CD14-positive monocyte (primary cell): ENCODE measurements at regions of chr4 and their contacts with region 1.

Region 1: DNA sequence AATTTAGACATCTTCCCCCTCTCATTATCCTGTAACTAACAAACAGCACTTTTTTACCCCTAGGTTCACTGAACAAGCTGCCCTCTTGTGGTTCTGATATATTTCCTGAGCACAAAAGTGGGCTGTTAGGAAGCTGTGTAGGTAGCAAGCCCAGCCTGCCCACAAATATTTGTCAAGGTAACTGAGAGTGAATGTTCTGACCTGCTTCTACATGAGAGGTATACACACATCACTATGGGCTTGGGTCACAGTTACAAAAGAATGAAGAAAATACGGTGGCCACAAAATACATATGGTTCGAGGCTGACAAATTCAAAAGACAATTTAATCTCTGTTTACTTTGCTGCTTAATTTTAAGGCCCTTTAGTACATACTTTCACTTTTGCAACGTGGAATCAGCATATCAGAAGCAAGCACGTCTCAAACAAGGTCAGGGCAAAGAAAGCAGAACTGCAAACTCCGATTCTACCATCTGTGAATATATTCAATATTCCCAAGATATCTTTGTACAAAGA is 78.7 kb downstream of the RBM47 start:
- DNase-seq: peak; percentile 53 to 69 (median 65)
- H3K4me3 ChIP-seq: peak overlapping the region; percentile 36 to 71 (median 54)
- H3K4me3 Mint-ChIP-seq: peak overlapping the region; percentile 80 to 91
- H3K27ac ChIP-seq: peak overlapping the region; percentile 81 to 93
- H3K27ac Mint-ChIP-seq: peak overlapping the region; percentile 93 to 99 (median 98)
- H3K4me1 ChIP-seq: peaks cover 78 to 86% of the 10 kb centered on the region in 2 donors
- H3K4me1 Mint-ChIP-seq: peaks cover 78% of the 10 kb centered on the region
- H3K27me3 ChIP-seq: no peaks in the 10 kb centered on the region
- H3K27me3 Mint-ChIP-seq: no peaks in the 10 kb centered on the region
- CTCF ChIP-seq: peak; percentile 33

Region 2: DNA sequence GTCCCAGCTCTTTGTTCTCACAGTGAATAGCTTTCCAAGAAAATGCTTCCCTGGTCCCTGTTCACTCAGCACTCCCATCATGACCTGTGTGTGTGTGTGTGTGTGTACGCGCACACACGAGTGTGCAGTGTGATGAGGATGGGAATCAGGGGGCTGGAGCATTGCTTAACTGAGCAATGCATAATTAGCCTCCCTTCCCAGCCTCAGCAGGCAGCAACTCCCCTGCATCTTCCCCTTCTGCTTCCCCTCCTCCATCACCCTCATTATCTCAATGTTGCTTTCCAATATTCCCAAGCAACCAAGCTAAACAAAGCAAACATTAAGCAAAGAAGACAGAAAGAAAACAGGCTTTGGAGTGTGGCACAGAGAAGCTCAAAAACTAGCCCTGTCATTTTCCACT is 58.3 kb before region 1 on chr4:
- intact Hi-C with region 1: loop called (anchors 10 kb)
- DNase-seq: peak in 2 of 3 donors; percentile 14 to 19
- H3K4me3 ChIP-seq: no peak overlapping the region
- H3K4me3 Mint-ChIP-seq: no peak overlapping the region
- H3K27ac ChIP-seq: peak overlapping the region; percentile 25 to 79
- H3K27ac Mint-ChIP-seq: peak overlapping the region; percentile 79 to 93 (median 91)
- H3K4me1 ChIP-seq: peaks cover 35 to 57% of the 10 kb centered on the region in 2 donors
- H3K4me1 Mint-ChIP-seq: peaks cover 60% of the 10 kb centered on the region
- H3K27me3 ChIP-seq: no peaks in the 10 kb centered on the region
- H3K27me3 Mint-ChIP-seq: no peaks in the 10 kb centered on the region
- CTCF ChIP-seq: no peak

Region 3: GRCh38 chr4:40587823-40588222 is 36.8 kb after region 1 on chr4:
- intact Hi-C with region 1: loop called in 1 of 2 experiments (anchors 5 kb)
- DNase-seq: peak; percentile 82 to 92 (median 87)
- H3K4me3 ChIP-seq: peak overlapping the region in 1 of 3 experiments; percentile 49
- H3K4me3 Mint-ChIP-seq: peak overlapping the region in 1 of 2 donors; percentile 86
- H3K27ac ChIP-seq: peak overlapping the region; percentile 78 to 92
- H3K27ac Mint-ChIP-seq: peak overlapping the region; percentile 97 to 100 (median 99)
- H3K4me1 ChIP-seq: peaks cover 44 to 45% of the 10 kb centered on the region in 2 donors
- H3K4me1 Mint-ChIP-seq: peaks cover 58% of the 10 kb centered on the region
- H3K27me3 ChIP-seq: no peaks in the 10 kb centered on the region
- H3K27me3 Mint-ChIP-seq: no peaks in the 10 kb centered on the region
- CTCF ChIP-seq: no peak

Region 4: GRCh38 chr4:40607221-40607620 is 56.2 kb after region 1 on chr4:
- intact Hi-C with region 1: loop called in 1 of 2 experiments (anchors 10 kb)
- DNase-seq: peak; percentile 54 to 67 (median 55)
- H3K4me3 ChIP-seq: peak overlapping the region in 1 of 3 experiments; percentile 9
- H3K4me3 Mint-ChIP-seq: peak overlapping the region in 1 of 2 donors; percentile 33
- H3K27ac ChIP-seq: peak overlapping the region; percentile 54 to 79
- H3K27ac Mint-ChIP-seq: peak overlapping the region; percentile 8 to 97 (median 95)
- H3K4me1 ChIP-seq: peaks cover 66 to 94% of the 10 kb centered on the region in 2 donors
- H3K4me1 Mint-ChIP-seq: peaks cover 79% of the 10 kb centered on the region
- H3K27me3 ChIP-seq: no peaks in the 10 kb centered on the region
- H3K27me3 Mint-ChIP-seq: peaks cover 0 to 2% (median 2%) of the 10 kb centered on the region in 3 donors
- CTCF ChIP-seq: no peak

Region 5: DNA sequence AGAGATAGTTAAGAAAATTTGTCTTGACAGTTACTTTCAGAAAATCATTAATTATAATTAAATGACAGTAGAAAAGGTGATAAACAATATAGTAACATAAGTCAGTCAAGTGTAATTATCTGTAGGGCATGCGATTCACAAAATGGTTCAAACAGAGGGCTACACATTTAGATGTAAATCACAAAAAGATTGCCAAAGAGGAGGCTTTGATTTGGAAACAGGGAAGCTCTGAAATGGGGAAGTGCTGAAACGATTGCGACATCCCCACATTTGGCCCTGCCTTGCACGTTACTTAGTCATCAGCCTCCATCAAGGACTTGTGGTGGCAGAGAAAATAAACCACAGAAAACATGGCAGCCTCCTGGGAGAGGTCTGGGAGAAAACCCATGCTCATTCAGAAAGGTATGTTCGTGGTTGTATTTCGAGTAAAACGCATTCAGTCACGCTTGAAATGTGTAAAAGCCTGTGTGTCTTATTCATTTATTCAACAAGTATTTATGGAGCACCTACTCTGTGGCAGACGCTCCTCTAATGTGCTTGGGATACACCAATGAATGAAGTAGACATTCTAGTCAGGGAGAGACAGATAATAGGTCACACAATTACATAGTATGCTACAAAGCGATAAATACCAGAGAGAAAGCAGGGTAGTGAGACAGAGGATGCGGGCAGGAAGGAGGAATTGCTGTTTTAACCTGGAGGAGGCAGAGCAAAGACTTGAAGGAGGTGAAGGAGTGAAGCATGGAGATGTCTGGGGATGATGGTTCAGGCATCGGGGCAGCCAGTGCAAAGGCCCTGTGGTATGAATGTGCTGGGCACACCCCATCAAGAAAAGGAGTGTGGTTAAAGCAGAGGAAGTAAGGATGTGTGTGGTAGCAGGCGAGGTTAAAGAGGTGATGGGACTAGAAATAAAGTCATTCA is 70.8 kb after region 1 on chr4:
- intact Hi-C with region 1: loop called (anchors 2 to 5 kb)
- DNase-seq: peak; percentile 99
- H3K4me3 ChIP-seq: peak overlapping the region in 2 of 3 experiments; percentile 9 to 56
- H3K4me3 Mint-ChIP-seq: peak overlapping the region; percentile 13 to 75
- H3K27ac ChIP-seq: peak overlapping the region; percentile 88 to 97
- H3K27ac Mint-ChIP-seq: peak overlapping the region; percentile 94 to 98 (median 97)
- H3K4me1 ChIP-seq: peaks cover 84 to 92% of the 10 kb centered on the region in 2 donors
- H3K4me1 Mint-ChIP-seq: peaks cover 83% of the 10 kb centered on the region
- H3K27me3 ChIP-seq: no peaks in the 10 kb centered on the region
- H3K27me3 Mint-ChIP-seq: peaks cover 0 to 1% (median 0%) of the 10 kb centered on the region in 3 donors
- CTCF ChIP-seq: no peak

Region 6: DNA sequence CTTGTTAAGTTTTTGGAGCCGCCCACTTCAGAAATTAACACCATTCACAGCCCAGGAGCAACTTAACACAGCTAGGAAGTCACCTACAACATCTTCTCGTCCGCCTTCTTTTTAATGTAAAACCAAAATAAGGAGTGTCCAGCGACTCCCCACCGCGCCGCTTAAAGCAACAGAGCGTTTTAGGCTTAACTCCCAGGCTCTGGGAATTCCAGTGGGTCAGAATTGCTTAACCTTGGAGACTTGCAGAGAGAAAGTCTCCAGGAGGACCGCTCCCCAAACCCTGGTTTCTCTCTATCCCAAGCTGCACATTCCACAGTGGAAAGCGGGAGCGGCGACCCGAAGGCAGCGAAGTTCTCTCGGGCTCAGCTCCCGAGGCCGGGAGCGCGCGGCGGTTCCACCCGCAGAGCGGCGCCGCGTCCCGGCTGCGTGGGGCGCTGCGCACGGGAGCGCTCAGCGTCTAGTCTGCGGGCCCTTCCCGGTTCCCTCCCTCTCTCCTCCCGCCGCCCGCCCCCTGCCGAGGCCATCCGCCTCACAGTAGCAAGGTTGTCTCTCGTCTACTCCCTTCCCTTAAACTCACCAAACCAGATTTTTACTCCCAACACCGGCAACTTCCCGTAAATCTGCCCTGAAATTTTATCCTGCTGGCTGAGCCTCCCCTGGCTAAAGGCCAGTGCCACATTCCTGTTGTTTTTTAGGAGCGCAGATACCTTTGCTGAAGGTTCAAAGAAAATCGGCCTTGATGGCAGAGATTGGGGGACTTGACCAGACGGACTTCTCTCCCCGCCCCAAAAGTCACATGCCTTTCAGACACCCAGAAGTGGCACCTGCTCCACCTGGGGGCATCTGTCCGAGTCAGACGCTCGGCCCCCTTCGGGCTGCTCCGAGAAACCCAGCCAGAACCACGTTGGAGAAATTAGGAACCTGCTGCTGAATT is 78.7 kb after region 1 on chr4 and contains the start of gene RBM47:
- intact Hi-C with region 1: loop called in 1 of 2 experiments (anchors 5 kb)
- DNase-seq: peak; percentile 62 to 75 (median 66)
- H3K4me3 ChIP-seq: peak within 1 kb of the TSS; percentile 91 to 99 (median 97)
- H3K4me3 Mint-ChIP-seq: peak within 1 kb of the TSS; percentile 98 to 100
- H3K27ac ChIP-seq: peak within 1 kb of the TSS; percentile 97 to 100
- H3K27ac Mint-ChIP-seq: peak within 1 kb of the TSS; percentile 99 to 100 (median 99)
- H3K4me1 ChIP-seq: peaks cover 51 to 70% of the 10 kb centered on the region in 2 donors
- H3K4me1 Mint-ChIP-seq: peaks cover 59% of the 10 kb centered on the region
- H3K27me3 ChIP-seq: no peaks in the 10 kb centered on the region
- H3K27me3 Mint-ChIP-seq: peaks cover 0 to 3% (median 0%) of the 10 kb centered on the region in 3 donors
- CTCF ChIP-seq: peak; percentile 32
- polyA plus RNA-seq, gene RBM47: 79.5 to 101 (median 92.8) TPM